A673 (cell line): ENCODE measurements at regions of chr2 and their contacts with region 1.

Region 1: DNA sequence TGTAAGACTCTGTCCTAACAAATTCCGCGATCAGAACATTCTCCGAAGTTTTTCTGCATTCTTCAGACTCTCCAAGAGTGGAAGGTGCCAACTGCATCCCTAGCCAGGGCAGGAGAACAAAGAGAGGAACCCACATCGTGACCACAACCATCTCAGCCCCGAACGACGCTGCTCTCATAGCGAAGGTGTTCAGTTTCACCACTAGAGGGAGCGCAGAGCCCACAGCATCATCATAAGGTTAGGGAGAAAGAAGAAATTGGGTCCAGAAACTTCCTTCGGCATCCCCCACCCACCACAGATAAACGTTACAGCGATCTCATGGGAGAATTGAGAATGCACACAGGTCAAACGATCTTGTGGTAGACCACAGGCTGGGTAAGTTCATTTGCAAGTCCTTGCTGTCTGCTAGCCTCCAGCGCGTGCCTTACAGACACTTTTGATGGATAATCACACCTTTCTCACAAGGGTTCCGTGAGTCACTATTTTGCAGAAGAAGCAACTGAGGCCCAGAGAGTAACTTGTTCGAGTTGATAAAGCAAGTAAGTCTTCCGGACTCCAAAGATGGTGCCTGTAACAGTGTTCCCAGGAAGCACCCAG is 53.7 kb upstream of the ARL4C start:
- DNase-seq: peak; percentile 86
- H3K4me3 ChIP-seq: no peak overlapping the region
- H3K27ac ChIP-seq: no peak overlapping the region
- H3K4me1 ChIP-seq: no peaks in the 10 kb centered on the region
- H3K27me3 ChIP-seq: no peaks in the 10 kb centered on the region
- CTCF ChIP-seq: peak; percentile 93

Region 2: GRCh38 chr2:234459401-234460009 is 91.1 kb before region 1 on chr2:
- CTCF ChIA-PET with region 1: no interaction called
- POLR2A ChIA-PET with region 1: no interaction called
- intact Hi-C with region 1: no loop called
- DNase-seq: no peak
- H3K4me3 ChIP-seq: no peak overlapping the region
- H3K27ac ChIP-seq: no peak overlapping the region
- H3K4me1 ChIP-seq: no peaks in the 10 kb centered on the region
- H3K27me3 ChIP-seq: no peaks in the 10 kb centered on the region
- CTCF ChIP-seq: no peak

Region 3: GRCh38 chr2:234974501-234975385 is 424.1 kb after region 1 on chr2:
- CTCF ChIA-PET with region 1: no interaction called
- POLR2A ChIA-PET with region 1: no interaction called
- intact Hi-C with region 1: loop called (anchors 10 kb)
- DNase-seq: peak; percentile 81
- H3K4me3 ChIP-seq: no peak overlapping the region
- H3K27ac ChIP-seq: no peak overlapping the region
- H3K4me1 ChIP-seq: peaks cover 36% of the 10 kb centered on the region
- H3K27me3 ChIP-seq: no peaks in the 10 kb centered on the region
- CTCF ChIP-seq: no peak

Region 4: GRCh38 chr2:235106874-235107639 is 556.4 kb after region 1 on chr2:
- CTCF ChIA-PET with region 1: interaction called, 7 read pairs
- POLR2A ChIA-PET with region 1: no interaction called
- intact Hi-C with region 1: loop called (anchors 1 kb)
- DNase-seq: peak; percentile 81
- H3K4me3 ChIP-seq: no peak overlapping the region
- H3K27ac ChIP-seq: no peak overlapping the region
- H3K4me1 ChIP-seq: no peaks in the 10 kb centered on the region
- H3K27me3 ChIP-seq: no peaks in the 10 kb centered on the region
- CTCF ChIP-seq: peak; percentile 75